ENCODE measurements at regions of chr5 and their contacts with region 1.

Region 1: DNA sequence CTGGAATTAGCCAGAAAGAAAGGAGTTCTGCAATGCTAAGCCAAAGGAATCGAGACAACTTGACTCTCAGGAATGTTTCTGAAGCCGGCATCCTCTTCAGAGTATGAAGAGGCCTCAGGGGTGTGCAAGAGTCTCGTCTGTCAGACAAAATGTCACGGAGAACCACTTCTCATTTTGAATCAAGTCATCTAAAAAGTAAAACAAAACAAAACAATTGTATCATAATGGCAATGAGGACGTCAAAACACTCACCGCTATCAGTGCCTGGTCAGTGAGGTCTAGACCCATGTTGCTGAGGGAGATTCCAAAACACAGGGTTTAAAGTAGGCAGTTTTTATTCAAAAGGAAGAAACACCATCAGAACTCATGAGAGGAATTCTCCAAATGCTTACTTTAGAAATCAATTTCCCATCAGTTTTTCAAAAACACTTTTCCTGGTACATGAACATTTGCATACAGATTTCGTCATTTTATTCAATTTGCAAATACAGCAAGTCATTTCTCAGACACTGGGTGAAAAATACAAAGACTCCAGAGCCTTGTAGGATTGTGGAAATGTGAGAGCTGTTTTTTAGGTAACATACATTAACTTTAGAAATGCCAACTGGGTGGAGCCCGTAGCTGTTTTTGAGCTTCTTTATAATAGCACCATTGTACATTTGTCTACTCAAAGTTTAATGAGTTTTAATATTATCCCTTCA is 89.5 kb upstream of the MAP3K1 start:
- DNase-seq: no peak
- ATAC-seq: no peak
- H3K4me3 Mint-ChIP-seq: peak overlapping the region; percentile 19
- H3K27ac Mint-ChIP-seq: peak overlapping the region; percentile 71
- H3K4me1 Mint-ChIP-seq: peaks cover 32% of the 10 kb centered on the region
- H3K27me3 Mint-ChIP-seq: no peaks in the 10 kb centered on the region
- CTCF ChIP-seq: no peak

Region 2: GRCh38 chr5:56588636-56589480 is 137.0 kb before region 1 on chr5:
- CTCF ChIA-PET with region 1: no interaction called
- POLR2A ChIA-PET with region 1: no interaction called
- intact Hi-C with region 1: loop called (anchors 2 kb)
- DNase-seq: peak; percentile 69
- ATAC-seq: peak; percentile 86
- H3K4me3 Mint-ChIP-seq: peak overlapping the region; percentile 64
- H3K27ac Mint-ChIP-seq: peak overlapping the region; percentile 97
- H3K4me1 Mint-ChIP-seq: peaks cover 69% of the 10 kb centered on the region
- H3K27me3 Mint-ChIP-seq: no peaks in the 10 kb centered on the region
- CTCF ChIP-seq: no peak

Measured in activated B cell treated with CpG ODN at 0.5 μM for 24 hours (primary cell).